ENCODE measurements at regions of chr7 and their contacts with region 1.

Region 1: GRCh38 chr7:50418086-50418515 is 32.0 kb downstream of the FIGNL1 start:
- DNase-seq: peak; percentile 36 to 94 (median 70)

Region 2: GRCh38 chr7:50142425-50143017 is 275.6 kb before region 1 on chr7:
- intact Hi-C with region 1: loop called (anchors 2 kb)
- DNase-seq: no peak

Region 3: GRCh38 chr7:50206453-50207250 is 211.4 kb before region 1 on chr7:
- intact Hi-C with region 1: loop called (anchors 5 kb)
- DNase-seq: peak in 1 of 10 donors; percentile 76

Region 4: DNA sequence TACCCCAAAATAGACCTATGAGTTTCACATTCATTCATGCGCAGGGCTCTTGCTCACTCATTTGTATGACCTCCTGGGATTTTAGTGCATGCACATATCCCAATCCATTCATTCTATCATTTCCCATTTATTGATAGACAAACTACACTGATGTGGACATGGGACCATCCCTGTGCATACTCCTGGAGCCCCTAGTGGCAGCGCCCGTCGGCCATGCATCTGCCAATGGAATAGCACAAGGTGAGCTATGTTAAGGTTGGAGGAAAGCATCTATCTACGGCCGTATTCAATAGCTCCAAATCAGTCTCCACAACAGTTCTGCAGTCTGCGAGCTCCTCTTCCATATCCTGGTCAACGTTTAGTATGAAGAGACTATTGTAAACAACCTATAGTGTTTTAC is 63.8 kb after region 1 on chr7:
- intact Hi-C with region 1: no loop called
- DNase-seq: no peak